ENCODE measurements at regions of chr1 and their contacts with region 1.

Region 1: GRCh38 chr1:69595486-69595885 is 27.8 kb downstream of the LRRC7 start:
- DNase-seq: no peak
- ATAC-seq: no peak
- H3K4me3 ChIP-seq: no peak overlapping the region
- H3K27ac ChIP-seq: no peak overlapping the region
- H3K4me1 ChIP-seq: no peaks in the 10 kb centered on the region
- H3K27me3 ChIP-seq: no peaks in the 10 kb centered on the region
- CTCF ChIP-seq: no peak
- EP300 ChIP-seq: no peak
- POLR2A ChIP-seq: no peak
- RAD21 ChIP-seq: no peak

Region 2: DNA sequence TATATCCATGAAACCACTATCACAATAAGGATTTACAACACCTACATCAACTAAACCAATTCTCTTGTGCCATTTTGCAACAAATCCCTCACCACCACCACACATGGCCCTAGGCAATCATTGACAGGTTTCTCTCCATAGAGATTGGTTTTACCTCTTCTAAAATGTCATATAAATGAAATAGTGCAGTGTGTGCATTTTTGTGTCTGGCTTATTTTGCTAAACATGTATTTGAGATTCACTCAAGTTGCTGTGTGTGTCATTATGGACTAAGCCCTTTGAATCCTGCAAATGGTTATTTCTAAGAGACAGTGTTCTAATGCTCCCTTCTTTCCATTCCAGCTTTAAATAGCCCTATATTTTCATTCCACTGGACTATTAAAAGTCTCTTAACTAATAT is 207.4 kb before region 1 on chr1:
- CTCF ChIA-PET with region 1: no interaction called
- POLR2A ChIA-PET with region 1: no interaction called
- RAD21 ChIA-PET with region 1: no interaction called
- SMC1A ChIA-PET with region 1: no interaction called
- in situ Hi-C with region 1: no loop called
- intact Hi-C with region 1: no loop called
- DNase-seq: no peak
- ATAC-seq: no peak
- H3K4me3 ChIP-seq: no peak overlapping the region
- H3K27ac ChIP-seq: no peak overlapping the region
- H3K4me1 ChIP-seq: no peaks in the 10 kb centered on the region
- H3K27me3 ChIP-seq: no peaks in the 10 kb centered on the region
- CTCF ChIP-seq: no peak
- EP300 ChIP-seq: no peak
- POLR2A ChIP-seq: no peak
- RAD21 ChIP-seq: no peak

Region 3: DNA sequence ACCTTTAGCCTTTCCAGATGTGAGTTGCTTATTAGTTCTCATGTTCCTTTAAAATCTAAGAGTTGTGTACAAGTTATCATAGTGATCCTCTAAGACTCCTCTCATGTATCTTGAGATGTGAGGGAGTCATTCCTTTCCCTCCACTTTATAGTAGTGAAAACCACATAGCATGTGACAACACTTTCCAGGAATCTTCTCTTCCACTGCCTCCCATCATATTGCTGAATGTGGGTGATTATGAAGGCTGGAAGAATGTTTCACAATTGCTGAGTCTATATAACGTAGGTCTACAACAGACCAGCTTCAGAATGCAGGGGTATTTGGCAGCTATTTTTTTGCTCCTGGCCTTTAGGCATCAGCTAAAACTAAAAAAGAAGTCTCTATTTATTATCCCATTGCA is 72.5 kb before region 1 on chr1:
- CTCF ChIA-PET with region 1: no interaction called
- POLR2A ChIA-PET with region 1: no interaction called
- RAD21 ChIA-PET with region 1: no interaction called
- SMC1A ChIA-PET with region 1: no interaction called
- in situ Hi-C with region 1: no loop called
- intact Hi-C with region 1: no loop called
- DNase-seq: no peak
- ATAC-seq: no peak
- H3K4me3 ChIP-seq: no peak overlapping the region
- H3K27ac ChIP-seq: no peak overlapping the region
- H3K4me1 ChIP-seq: no peaks in the 10 kb centered on the region
- H3K27me3 ChIP-seq: no peaks in the 10 kb centered on the region
- CTCF ChIP-seq: no peak
- EP300 ChIP-seq: no peak
- POLR2A ChIP-seq: no peak
- RAD21 ChIP-seq: no peak

Region 4: DNA sequence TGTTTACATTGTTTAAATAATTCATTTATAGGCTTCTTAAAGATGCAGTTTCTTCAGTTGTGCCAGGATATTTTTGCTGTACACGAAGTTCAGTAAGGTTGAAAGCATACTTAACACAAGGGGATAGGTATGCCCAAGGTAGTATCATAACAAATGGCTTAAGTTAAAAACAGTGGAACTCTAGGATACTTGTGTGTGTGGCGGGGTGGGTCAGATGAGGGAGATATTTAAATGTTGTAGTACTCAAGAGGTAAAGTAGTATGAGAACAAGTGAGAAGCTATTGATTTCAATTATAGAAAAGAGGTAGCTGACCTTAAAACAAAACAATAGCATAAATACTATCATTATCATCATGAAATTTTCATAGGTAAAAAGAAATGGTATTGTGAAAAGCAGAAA is 21.6 kb before region 1 on chr1:
- CTCF ChIA-PET with region 1: no interaction called
- POLR2A ChIA-PET with region 1: no interaction called
- RAD21 ChIA-PET with region 1: no interaction called
- SMC1A ChIA-PET with region 1: no interaction called
- in situ Hi-C with region 1: no loop called
- intact Hi-C with region 1: loop called (anchors 2 kb)
- DNase-seq: no peak
- ATAC-seq: no peak
- H3K4me3 ChIP-seq: no peak overlapping the region
- H3K27ac ChIP-seq: no peak overlapping the region
- H3K4me1 ChIP-seq: no peaks in the 10 kb centered on the region
- H3K27me3 ChIP-seq: peaks cover 0 to 2% of the 10 kb centered on the region in 2 experiments; a peak in 2 of 4 replicates
- CTCF ChIP-seq: no peak
- EP300 ChIP-seq: no peak
- POLR2A ChIP-seq: no peak
- RAD21 ChIP-seq: no peak

Region 5: DNA sequence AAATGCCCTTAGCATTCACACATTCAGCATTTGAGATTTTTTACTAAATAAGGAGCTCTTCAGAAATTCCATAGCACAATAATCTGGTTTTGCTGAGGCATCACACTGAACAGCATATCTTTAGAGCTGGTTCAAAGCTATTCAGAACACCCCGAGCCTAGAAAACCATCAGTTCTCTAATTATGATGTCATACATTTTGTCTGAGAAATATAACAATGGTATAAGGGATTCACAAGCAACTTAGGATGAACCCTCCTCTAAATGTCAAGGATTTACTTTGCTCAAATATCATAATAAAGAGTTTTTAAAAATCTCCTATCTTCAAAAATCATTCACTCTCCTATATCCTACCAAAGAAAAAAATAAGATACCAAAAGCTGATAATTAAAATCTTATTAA is 10.6 kb after region 1 on chr1:
- CTCF ChIA-PET with region 1: no interaction called
- POLR2A ChIA-PET with region 1: no interaction called
- RAD21 ChIA-PET with region 1: no interaction called
- SMC1A ChIA-PET with region 1: no interaction called
- in situ Hi-C with region 1: no loop called
- intact Hi-C with region 1: no loop called
- DNase-seq: no peak
- ATAC-seq: no peak
- H3K4me3 ChIP-seq: no peak overlapping the region
- H3K27ac ChIP-seq: no peak overlapping the region
- H3K4me1 ChIP-seq: no peaks in the 10 kb centered on the region
- H3K27me3 ChIP-seq: no peaks in the 10 kb centered on the region
- CTCF ChIP-seq: no peak
- EP300 ChIP-seq: no peak
- POLR2A ChIP-seq: no peak
- RAD21 ChIP-seq: no peak

Region 6: GRCh38 chr1:69671363-69672010 is 76.0 kb after region 1 on chr1:
- CTCF ChIA-PET with region 1: no interaction called
- POLR2A ChIA-PET with region 1: no interaction called
- RAD21 ChIA-PET with region 1: no interaction called
- SMC1A ChIA-PET with region 1: no interaction called
- in situ Hi-C with region 1: no loop called
- intact Hi-C with region 1: no loop called
- DNase-seq: no peak
- ATAC-seq: no peak
- H3K4me3 ChIP-seq: no peak overlapping the region
- H3K27ac ChIP-seq: no peak overlapping the region
- H3K4me1 ChIP-seq: no peaks in the 10 kb centered on the region
- H3K27me3 ChIP-seq: no peaks in the 10 kb centered on the region
- CTCF ChIP-seq: no peak
- EP300 ChIP-seq: no peak
- POLR2A ChIP-seq: no peak
- RAD21 ChIP-seq: no peak